GM12878 (cell line): ENCODE measurements at regions of chr4 and their contacts with region 1.

Region 1: DNA sequence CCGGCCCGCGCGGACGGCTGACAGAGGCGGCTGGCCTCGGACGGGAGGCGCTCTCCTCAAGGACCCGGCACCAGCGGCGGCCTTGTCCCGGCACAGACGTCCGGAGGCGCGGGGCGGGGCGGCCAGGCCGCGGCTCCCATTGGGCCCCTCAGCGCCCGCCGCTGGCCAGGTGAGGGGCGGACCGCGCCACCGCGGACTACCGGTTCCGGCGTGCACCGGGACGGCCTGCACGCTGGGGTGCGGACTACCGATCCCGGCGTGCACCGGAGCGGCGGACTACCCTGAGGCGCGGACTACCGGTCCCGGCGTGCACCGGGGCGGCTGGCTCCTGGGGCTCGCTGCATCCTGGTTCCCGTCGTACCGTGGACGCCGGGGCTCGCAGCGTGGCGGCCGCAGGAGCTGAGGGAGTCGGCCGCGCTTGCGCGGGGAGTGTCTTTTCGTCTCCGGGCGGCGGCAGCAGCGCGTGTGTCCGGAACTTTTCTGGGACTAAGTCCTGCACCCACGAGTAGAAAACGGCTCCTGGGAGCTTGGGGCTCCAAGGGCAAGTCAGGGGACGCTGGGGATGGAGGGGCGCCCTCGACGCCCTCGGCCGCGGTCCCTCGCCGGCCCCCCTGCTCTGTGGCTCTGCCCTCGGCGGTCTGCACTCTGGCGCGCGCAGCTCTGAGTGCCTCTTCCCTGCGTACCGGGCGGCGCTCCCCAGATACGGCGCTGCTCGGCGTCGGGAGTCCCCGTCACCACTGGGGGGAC is at the start of gene LETM1:
- DNase-seq: peak; percentile 83
- ATAC-seq: peak; percentile 96
- H3K4me3 ChIP-seq: peak within 1 kb of the TSS; percentile 95
- H3K27ac ChIP-seq: peak within 1 kb of the TSS; percentile 67
- H3K4me1 ChIP-seq: peaks cover 13% of the 10 kb centered on the region
- H3K27me3 ChIP-seq: no peaks in the 10 kb centered on the region
- CTCF ChIP-seq: no peak; a peak in 1 of 6 replicates
- EP300 ChIP-seq: no peak
- POLR2A ChIP-seq: peak; percentile 88
- RAD21 ChIP-seq: no peak
- polyA plus RNA-seq, gene LETM1: 2.6 to 4.0 TPM

Region 2: DNA sequence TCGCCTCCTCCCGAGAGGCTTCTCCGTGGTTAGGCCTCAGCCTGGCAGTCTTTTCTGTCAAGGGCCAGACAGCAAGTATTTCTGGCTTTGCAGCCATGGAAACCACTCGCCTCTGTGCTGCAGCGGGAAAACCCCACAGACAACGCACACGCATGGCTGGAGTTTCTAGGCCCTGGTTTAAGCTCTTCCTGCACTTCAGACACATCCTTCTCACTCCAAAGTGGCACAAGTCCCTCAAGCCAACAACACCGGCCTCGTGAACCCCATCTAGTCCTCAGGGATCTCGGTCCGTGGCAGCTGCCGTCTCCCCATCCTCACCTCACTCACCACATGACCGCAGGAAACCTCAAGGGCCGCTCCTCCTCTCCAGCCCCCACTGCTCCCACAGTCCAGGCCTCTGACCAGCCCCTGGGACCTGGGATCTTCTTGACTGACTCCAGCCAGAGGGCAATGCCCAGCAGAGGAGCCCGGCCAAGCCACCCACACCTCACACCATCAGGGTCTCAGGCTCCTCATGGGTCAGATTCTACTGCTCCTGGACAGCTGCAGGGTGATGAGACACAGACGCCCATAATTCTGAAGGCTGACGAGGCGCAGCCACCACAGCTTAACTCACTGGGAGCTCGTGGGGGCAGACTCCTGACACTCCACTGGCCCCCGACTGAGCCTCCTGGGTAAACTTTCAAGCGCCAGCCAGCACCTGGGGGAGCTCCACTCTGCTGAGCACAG is 22.0 kb before region 1 on chr4:
- CTCF ChIA-PET with region 1: interaction called, 16 read pairs
- POLR2A ChIA-PET with region 1: interaction called, 3 read pairs
- RAD21 ChIA-PET with region 1: interaction called, 3 read pairs
- SMC1A ChIA-PET with region 1: interaction called, 6 read pairs
- in situ Hi-C with region 1: no loop called
- intact Hi-C with region 1: no loop called
- DNase-seq: peak; percentile 55
- ATAC-seq: peak; percentile 96
- H3K4me3 ChIP-seq: no peak overlapping the region
- H3K27ac ChIP-seq: peak overlapping the region; percentile 87
- H3K4me1 ChIP-seq: peaks cover 30% of the 10 kb centered on the region
- H3K27me3 ChIP-seq: no peaks in the 10 kb centered on the region
- CTCF ChIP-seq: no peak; a peak in 1 of 6 replicates
- EP300 ChIP-seq: no peak
- POLR2A ChIP-seq: peak; percentile 45; the same call in 1 of the 2 replicates
- RAD21 ChIP-seq: no peak